CD4-positive, alpha-beta memory T cell (primary cell): ENCODE measurements at regions of chr2 and their contacts with region 1.

Region 1: DNA sequence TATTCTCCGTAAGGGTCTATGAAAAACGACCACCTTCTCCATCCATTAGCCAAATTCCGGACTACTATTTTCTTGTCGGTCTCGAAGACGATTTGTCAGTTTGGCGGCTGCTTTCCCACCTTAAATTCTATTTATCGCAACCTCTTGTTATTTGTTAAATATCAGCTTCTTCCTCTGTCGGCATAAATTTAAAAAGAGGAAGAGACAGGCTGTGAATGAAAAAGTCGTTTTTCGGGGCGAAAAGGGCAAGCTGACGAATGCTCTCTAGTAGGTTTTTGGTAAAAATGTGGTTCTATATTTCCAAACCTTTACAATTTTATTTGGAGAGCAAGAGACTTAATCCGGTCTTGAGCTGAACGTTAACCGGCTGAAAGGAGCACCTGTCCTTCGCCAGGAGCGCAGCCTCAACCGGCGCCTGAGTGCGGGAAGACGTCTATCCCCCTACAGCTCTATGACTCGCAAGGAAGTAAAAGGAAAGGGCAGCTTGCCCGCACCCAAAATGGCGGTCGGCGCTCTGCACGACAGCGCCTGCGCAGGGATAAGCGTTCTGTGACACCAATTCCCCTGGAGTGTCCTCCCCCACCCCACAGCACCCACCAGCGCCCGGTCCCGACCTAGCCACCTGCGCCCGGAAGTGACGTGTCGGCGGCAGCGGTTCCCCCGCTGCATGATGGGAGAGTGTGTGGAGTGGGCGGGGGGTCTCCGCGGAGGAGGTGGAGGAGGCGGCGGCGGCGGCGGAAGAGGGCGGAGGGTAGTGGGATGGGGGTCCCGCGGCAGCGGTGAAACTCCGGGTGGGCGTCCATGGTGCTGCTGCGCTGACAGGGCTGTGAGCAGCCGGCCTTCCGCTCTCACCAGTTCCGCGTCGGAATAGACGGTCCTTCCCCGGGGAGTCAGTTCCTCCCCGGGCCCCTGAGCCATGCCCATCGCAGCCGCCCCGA is at the start of gene AFTPH:
- DNase-seq: peak; percentile 98 to 100 (median 99)
- H3K4me3 ChIP-seq: peak within 1 kb of the TSS; percentile 94 to 95
- H3K4me3 Mint-ChIP-seq: peak within 1 kb of the TSS; percentile 99 to 100 (median 99)
- H3K27ac ChIP-seq: peak within 1 kb of the TSS; percentile 96
- H3K27ac Mint-ChIP-seq: peak within 1 kb of the TSS; percentile 97 to 99 (median 99)
- H3K4me1 ChIP-seq: peaks cover 40% of the 10 kb centered on the region
- H3K4me1 Mint-ChIP-seq: peaks cover 32 to 50% (median 39%) of the 10 kb centered on the region in 4 donors
- H3K27me3 ChIP-seq: no peaks in the 10 kb centered on the region
- H3K27me3 Mint-ChIP-seq: peaks cover 0 to 2% of the 10 kb centered on the region in 2 donors
- total RNA-seq, gene AFTPH: 48.3 to 48.9 TPM

Region 2: DNA sequence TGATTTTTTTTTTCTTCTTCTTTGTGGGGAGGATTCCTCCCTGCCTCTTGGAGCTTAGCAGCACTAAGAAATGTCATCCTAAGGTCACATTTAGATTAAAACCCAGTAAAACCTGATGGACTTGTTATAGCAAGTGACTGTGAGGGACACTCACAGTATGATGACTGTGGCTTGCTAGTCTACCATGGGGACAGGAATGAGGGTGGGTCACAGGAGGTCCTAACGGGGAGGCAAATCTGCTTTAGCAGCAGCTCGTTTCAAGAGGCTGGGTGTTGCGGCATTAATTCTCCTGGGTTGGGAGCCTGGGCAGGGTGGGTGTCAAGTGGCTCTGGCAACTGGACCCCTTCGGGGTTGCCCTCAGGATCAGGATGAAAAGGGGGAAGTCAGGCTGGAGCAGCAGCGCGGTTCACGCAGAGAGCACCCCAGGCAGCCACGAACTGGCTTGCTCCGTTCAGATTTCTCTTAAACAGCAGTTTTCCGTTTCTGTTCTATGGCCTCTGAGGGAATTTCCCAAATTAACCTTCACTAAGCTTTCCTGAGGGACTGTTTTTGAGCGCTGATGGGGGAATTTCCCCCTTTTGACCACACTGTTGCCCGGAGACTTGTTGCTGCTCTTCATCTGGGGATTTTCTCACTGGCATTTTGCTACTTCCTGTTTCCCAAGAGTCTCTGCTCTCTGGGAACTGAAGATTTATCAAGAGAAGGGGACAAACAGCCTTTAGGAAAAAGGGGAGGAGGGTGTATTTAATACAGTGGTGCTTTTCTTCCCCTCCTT is 319.9 kb before region 1 on chr2:
- CTCF ChIA-PET with region 1: no interaction called
- POLR2A ChIA-PET with region 1: no interaction called
- intact Hi-C with region 1: no loop called
- DNase-seq: peak in 4 of 5 donors; percentile 43 to 82 (median 54)
- H3K4me3 ChIP-seq: peak overlapping the region; percentile 5 to 35
- H3K4me3 Mint-ChIP-seq: peak overlapping the region; percentile 62 to 93 (median 80)
- H3K27ac ChIP-seq: peak overlapping the region; percentile 87
- H3K27ac Mint-ChIP-seq: peak overlapping the region; percentile 91 to 99 (median 96)
- H3K4me1 ChIP-seq: peaks cover 81% of the 10 kb centered on the region
- H3K4me1 Mint-ChIP-seq: peaks cover 54 to 85% (median 75%) of the 10 kb centered on the region in 4 donors
- H3K27me3 ChIP-seq: no peaks in the 10 kb centered on the region
- H3K27me3 Mint-ChIP-seq: no peaks in the 10 kb centered on the region

Region 3: DNA sequence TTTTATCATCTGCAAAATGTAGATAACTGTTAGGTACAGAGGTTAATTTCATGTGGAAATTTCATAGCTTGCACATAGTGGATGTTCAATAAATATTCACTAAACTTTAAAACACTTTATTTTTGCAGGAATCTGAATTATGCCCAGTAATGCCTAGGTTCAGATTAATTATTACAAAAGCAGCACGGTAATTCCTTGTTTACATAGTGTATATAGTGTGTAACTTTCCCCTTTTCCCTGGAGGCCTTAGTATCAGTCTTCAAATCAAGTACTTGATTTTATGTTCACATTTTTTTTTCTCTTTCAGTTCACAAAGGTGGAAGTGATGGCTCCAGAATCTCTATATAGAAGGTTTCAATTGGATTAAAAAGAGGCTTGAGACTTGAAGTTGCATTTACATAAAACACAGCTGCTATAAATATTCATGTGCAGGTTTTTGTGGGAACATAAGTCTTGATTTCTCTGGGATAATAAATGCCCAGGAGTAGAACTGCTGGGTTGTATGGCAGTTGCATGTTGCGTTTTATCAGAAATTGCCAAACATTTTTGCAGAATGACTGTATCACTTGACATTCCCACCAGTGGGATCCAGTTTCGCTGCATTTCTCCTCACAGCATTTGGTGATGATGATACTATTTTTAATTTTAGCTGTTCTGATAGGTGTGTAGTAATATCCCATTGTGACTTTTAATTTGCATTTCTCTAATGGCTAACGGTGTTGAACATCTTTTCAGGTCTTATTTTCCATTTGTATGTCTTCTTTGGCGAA is 97.6 kb before region 1 on chr2:
- CTCF ChIA-PET with region 1: no interaction called
- POLR2A ChIA-PET with region 1: no interaction called
- intact Hi-C with region 1: no loop called
- DNase-seq: no peak
- H3K4me3 ChIP-seq: no peak overlapping the region
- H3K4me3 Mint-ChIP-seq: no peak overlapping the region
- H3K27ac ChIP-seq: no peak overlapping the region
- H3K27ac Mint-ChIP-seq: no peak overlapping the region
- H3K4me1 ChIP-seq: no peaks in the 10 kb centered on the region
- H3K4me1 Mint-ChIP-seq: no peaks in the 10 kb centered on the region
- H3K27me3 ChIP-seq: no peaks in the 10 kb centered on the region
- H3K27me3 Mint-ChIP-seq: peaks cover 3 to 4% of the 10 kb centered on the region in 2 donors

Region 4: GRCh38 chr2:64439194-64439593 is 84.7 kb before region 1 on chr2:
- CTCF ChIA-PET with region 1: no interaction called
- POLR2A ChIA-PET with region 1: no interaction called
- intact Hi-C with region 1: no loop called
- DNase-seq: no peak
- H3K4me3 ChIP-seq: no peak overlapping the region
- H3K4me3 Mint-ChIP-seq: no peak overlapping the region
- H3K27ac ChIP-seq: no peak overlapping the region
- H3K27ac Mint-ChIP-seq: no peak overlapping the region
- H3K4me1 ChIP-seq: no peaks in the 10 kb centered on the region
- H3K4me1 Mint-ChIP-seq: no peaks in the 10 kb centered on the region
- H3K27me3 ChIP-seq: no peaks in the 10 kb centered on the region
- H3K27me3 Mint-ChIP-seq: peaks cover 20 to 45% of the 10 kb centered on the region in 2 donors

Region 5: GRCh38 chr2:64534363-64534762 is 10.4 kb after region 1 on chr2:
- CTCF ChIA-PET with region 1: interaction called, 5 read pairs
- POLR2A ChIA-PET with region 1: interaction called, 20 read pairs
- intact Hi-C with region 1: no loop called
- DNase-seq: no peak
- H3K4me3 ChIP-seq: no peak overlapping the region
- H3K4me3 Mint-ChIP-seq: peak overlapping the region in 6 of 8 donors; percentile 2 to 79 (median 60)
- H3K27ac ChIP-seq: no peak overlapping the region
- H3K27ac Mint-ChIP-seq: peak overlapping the region in 2 of 7 donors; percentile 17 to 20
- H3K4me1 ChIP-seq: peaks cover 66% of the 10 kb centered on the region
- H3K4me1 Mint-ChIP-seq: peaks cover 42 to 67% (median 55%) of the 10 kb centered on the region in 4 donors
- H3K27me3 ChIP-seq: no peaks in the 10 kb centered on the region
- H3K27me3 Mint-ChIP-seq: no peaks in the 10 kb centered on the region

Region 6: GRCh38 chr2:64609227-64609941 is 85.4 kb after region 1 on chr2:
- CTCF ChIA-PET with region 1: interaction called, 27 read pairs
- POLR2A ChIA-PET with region 1: interaction called, 41 read pairs
- intact Hi-C with region 1: loop called (anchors 1 kb)
- DNase-seq: peak; percentile 58 to 79 (median 76)
- H3K4me3 ChIP-seq: peak overlapping the region in 1 of 2 donors; percentile 61
- H3K4me3 Mint-ChIP-seq: peak overlapping the region; percentile 64 to 79 (median 75)
- H3K27ac ChIP-seq: peak overlapping the region; percentile 57
- H3K27ac Mint-ChIP-seq: peak overlapping the region; percentile 35 to 83 (median 70)
- H3K4me1 ChIP-seq: peaks cover 38% of the 10 kb centered on the region
- H3K4me1 Mint-ChIP-seq: peaks cover 10 to 33% (median 22%) of the 10 kb centered on the region in 4 donors
- H3K27me3 ChIP-seq: no peaks in the 10 kb centered on the region
- H3K27me3 Mint-ChIP-seq: no peaks in the 10 kb centered on the region

Region 7: DNA sequence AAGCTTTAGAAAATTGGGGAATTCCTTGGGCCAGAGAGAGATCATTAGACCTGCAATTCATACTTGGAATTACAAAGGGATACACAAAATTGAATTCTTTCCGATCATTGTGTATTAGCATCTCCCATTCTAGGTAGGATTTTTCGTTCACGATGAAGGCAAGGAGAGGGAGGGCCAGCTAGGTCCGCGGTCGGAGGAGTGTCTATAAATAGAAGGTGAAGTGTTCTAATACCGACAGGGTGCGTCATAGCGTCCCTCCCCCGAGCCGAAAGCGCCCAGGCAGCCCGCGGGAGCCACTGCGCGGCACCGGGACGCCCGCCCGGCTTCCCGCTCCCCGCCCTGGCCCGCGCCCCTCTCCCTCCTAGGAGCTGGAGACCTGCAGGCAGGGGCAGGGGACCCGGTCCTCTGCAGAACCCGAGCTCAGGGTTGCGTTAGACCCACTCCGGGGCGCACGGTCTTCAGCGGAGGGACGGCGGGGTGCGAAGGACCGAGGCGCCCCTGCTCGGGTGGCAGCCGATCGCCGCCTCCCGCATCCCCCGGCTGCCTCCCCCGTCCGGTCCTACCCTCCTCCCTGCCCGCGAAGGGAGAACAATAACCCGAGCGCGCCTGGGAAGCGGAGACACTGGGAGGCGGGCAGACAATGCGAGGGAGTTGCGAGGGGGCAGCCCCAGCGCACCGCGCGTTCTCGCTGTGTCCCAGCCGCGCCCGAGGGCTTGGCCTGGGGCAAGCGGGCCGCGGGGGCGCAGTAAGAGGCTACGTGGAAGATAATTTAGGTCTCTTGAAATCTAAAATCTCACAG is 243.9 kb after region 1 on chr2:
- CTCF ChIA-PET with region 1: no interaction called
- POLR2A ChIA-PET with region 1: interaction called, 5 read pairs
- intact Hi-C with region 1: loop called (anchors 2 kb)
- DNase-seq: peak; percentile 66 to 86 (median 69)
- H3K4me3 ChIP-seq: peak overlapping the region; percentile 47 to 72
- H3K4me3 Mint-ChIP-seq: peak overlapping the region; percentile 86 to 99 (median 94)
- H3K27ac ChIP-seq: peak overlapping the region; percentile 90
- H3K27ac Mint-ChIP-seq: peak overlapping the region; percentile 81 to 97 (median 96)
- H3K4me1 ChIP-seq: peaks cover 14% of the 10 kb centered on the region
- H3K4me1 Mint-ChIP-seq: peaks cover 12 to 23% (median 13%) of the 10 kb centered on the region in 4 donors
- H3K27me3 ChIP-seq: no peaks in the 10 kb centered on the region
- H3K27me3 Mint-ChIP-seq: no peaks in the 10 kb centered on the region

Region 8: GRCh38 chr2:65056215-65057053 is 532.5 kb after region 1 on chr2 and contains the start of gene CEP68:
- CTCF ChIA-PET with region 1: interaction called, 3 read pairs
- POLR2A ChIA-PET with region 1: interaction called, 5 read pairs
- intact Hi-C with region 1: loop called (anchors 2 kb)
- DNase-seq: peak; percentile 94 to 97 (median 95)
- H3K4me3 ChIP-seq: peak within 1 kb of the TSS; percentile 83 to 92
- H3K4me3 Mint-ChIP-seq: peak within 1 kb of the TSS; percentile 90 to 98 (median 97)
- H3K27ac ChIP-seq: peak within 1 kb of the TSS; percentile 67
- H3K27ac Mint-ChIP-seq: peak within 1 kb of the TSS; percentile 94 to 98 (median 97)
- H3K4me1 ChIP-seq: peaks cover 73% of the 10 kb centered on the region
- H3K4me1 Mint-ChIP-seq: peaks cover 35 to 77% (median 46%) of the 10 kb centered on the region in 4 donors
- H3K27me3 ChIP-seq: no peaks in the 10 kb centered on the region
- H3K27me3 Mint-ChIP-seq: no peaks in the 10 kb centered on the region
- total RNA-seq, gene CEP68: 57.7 to 59.9 TPM